Activated B cell treated with CpG ODN at 0.5 μM for 24 hours (primary cell): ENCODE measurements at regions of chr17 and their contacts with region 1.

Region 1: DNA sequence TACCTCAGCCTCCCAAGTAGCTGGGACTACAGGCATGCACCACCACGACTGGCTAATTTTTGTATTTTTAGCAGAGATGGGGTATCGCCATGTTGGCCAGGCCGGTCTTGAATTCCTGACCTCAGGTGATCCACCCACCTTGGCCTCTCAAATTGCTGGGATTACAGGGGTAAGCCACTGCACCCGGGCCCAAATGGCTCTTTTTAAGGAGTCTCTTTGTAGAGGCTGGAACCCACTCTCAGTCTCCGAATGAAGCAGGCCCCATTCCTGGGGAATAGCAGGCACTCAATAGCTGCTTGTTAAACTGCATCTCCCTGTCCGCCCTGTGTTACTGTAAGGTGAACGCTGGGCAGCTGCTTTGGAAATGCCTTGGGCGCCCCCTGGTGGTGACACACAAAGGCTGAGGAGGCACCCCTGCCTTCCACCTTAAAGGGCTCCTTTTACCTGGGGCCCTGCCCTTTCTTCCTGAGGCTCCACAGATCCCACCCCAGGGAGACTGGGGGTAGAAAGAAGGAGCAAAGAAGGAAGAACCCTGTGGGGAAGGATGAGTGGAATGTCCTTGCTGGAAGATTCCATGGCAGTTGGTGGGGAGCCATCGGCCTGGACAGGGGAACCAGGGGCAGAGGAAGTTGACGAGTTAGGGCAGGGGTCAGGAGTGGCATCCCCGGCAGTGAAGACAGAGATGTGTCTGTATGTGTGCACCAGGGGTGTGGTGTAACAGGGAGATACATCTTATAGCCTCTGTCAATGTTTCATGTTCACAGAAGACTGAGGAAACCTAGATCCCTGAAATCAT is 6.1 kb upstream of the SP2 start:
- DNase-seq: peak; percentile 80
- ATAC-seq: peak; percentile 97
- H3K4me3 Mint-ChIP-seq: no peak overlapping the region
- H3K27ac Mint-ChIP-seq: no peak overlapping the region
- H3K4me1 Mint-ChIP-seq: peaks cover 23% of the 10 kb centered on the region
- H3K27me3 Mint-ChIP-seq: no peaks in the 10 kb centered on the region
- CTCF ChIP-seq: peak; percentile 67

Region 2: GRCh38 chr17:47831003-47831933 is 58.7 kb before region 1 on chr17 and contains the starts of genes LRRC46 and MRPL10:
- CTCF ChIA-PET with region 1: interaction called, 5 read pairs
- POLR2A ChIA-PET with region 1: interaction called, 39 read pairs
- intact Hi-C with region 1: loop called (anchors 1 kb)
- DNase-seq: peak; percentile 87
- ATAC-seq: peak; percentile 96
- H3K4me3 Mint-ChIP-seq: peak within 1 kb of the TSS; percentile 96
- H3K27ac Mint-ChIP-seq: peak within 1 kb of the TSS; percentile 92
- H3K4me1 Mint-ChIP-seq: peaks cover 29% of the 10 kb centered on the region
- H3K27me3 Mint-ChIP-seq: no peaks in the 10 kb centered on the region
- CTCF ChIP-seq: no peak
- total RNA-seq, gene LRRC46: 1.5 and 1.9 TPM in 2 replicates
- total RNA-seq, gene MRPL10: 36.4 and 37.4 TPM in 2 replicates

Region 3: GRCh38 chr17:47840740-47841603 is 49.0 kb before region 1 on chr17 and contains the start of gene SCRN2:
- CTCF ChIA-PET with region 1: interaction called, 207 read pairs
- POLR2A ChIA-PET with region 1: interaction called, 50 read pairs
- intact Hi-C with region 1: loop called (anchors 1 kb)
- DNase-seq: peak; percentile 91
- ATAC-seq: peak; percentile 94
- H3K4me3 Mint-ChIP-seq: peak within 1 kb of the TSS; percentile 98
- H3K27ac Mint-ChIP-seq: peak within 1 kb of the TSS; percentile 79
- H3K4me1 Mint-ChIP-seq: peaks cover 23% of the 10 kb centered on the region
- H3K27me3 Mint-ChIP-seq: peaks cover 16% of the 10 kb centered on the region
- CTCF ChIP-seq: peak; percentile 61
- total RNA-seq, gene SCRN2: 32.1 and 36.3 TPM in 2 replicates

Region 4: GRCh38 chr17:47850692-47851573 is 39.0 kb before region 1 on chr17 and contains the start of gene SP6:
- CTCF ChIA-PET with region 1: interaction called, 207 read pairs
- POLR2A ChIA-PET with region 1: interaction called, 16 read pairs
- intact Hi-C with region 1: no loop called
- DNase-seq: peak; percentile 51
- ATAC-seq: peak; percentile 89
- H3K4me3 Mint-ChIP-seq: peak within 1 kb of the TSS; percentile 61
- H3K27ac Mint-ChIP-seq: no peak within 1 kb of the TSS
- H3K4me1 Mint-ChIP-seq: peaks cover 25% of the 10 kb centered on the region
- H3K27me3 Mint-ChIP-seq: peaks cover 73% of the 10 kb centered on the region
- CTCF ChIP-seq: no peak
- total RNA-seq, gene SP6: 0.09 TPM in 1 of 2 replicates, not detected in the other